ENCODE measurements at regions of chr3 and their contacts with region 1.

Region 1: GRCh38 chr3:120147072-120147871 is 53.0 kb upstream of the GSK3B start:
- DNase-seq: peak; percentile 66 to 90
- H3K4me3 ChIP-seq: peak overlapping the region; percentile 32; the same call in 1 of the 2 replicates
- H3K27ac ChIP-seq: peak overlapping the region; percentile 78
- H3K4me1 ChIP-seq: peaks cover 81% of the 10 kb centered on the region
- H3K27me3 ChIP-seq: no peaks in the 10 kb centered on the region
- CTCF ChIP-seq: peak; percentile 41; the same call in 1 of the 2 replicates

Region 2: DNA sequence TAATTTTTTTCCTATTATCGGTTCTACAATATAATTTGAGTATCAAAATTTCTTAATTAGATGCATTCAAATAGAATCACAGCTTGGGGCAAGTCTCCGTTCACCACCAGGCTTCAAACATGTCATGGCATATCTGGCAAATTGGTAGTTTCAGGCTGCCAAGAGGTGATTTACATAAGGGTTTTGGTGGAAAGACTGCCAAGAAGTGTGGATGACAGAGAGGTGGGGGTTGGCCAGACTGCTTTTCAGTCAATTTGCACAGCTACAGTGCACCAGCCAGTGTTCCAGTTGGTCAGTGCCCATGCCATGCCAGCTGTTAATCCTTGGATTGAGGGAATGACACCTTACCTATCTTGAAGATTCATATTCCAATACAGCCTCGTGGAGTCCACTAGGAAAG is 44.6 kb before region 1 on chr3:
- CTCF ChIA-PET with region 1: interaction called, 11 read pairs
- POLR2A ChIA-PET with region 1: no interaction called
- intact Hi-C with region 1: no loop called
- DNase-seq: no peak
- H3K4me3 ChIP-seq: no peak overlapping the region
- H3K27ac ChIP-seq: no peak overlapping the region
- H3K4me1 ChIP-seq: peaks cover 13% of the 10 kb centered on the region; the same call in 1 of the 2 replicates
- H3K27me3 ChIP-seq: no peaks in the 10 kb centered on the region
- CTCF ChIP-seq: no peak

Region 3: DNA sequence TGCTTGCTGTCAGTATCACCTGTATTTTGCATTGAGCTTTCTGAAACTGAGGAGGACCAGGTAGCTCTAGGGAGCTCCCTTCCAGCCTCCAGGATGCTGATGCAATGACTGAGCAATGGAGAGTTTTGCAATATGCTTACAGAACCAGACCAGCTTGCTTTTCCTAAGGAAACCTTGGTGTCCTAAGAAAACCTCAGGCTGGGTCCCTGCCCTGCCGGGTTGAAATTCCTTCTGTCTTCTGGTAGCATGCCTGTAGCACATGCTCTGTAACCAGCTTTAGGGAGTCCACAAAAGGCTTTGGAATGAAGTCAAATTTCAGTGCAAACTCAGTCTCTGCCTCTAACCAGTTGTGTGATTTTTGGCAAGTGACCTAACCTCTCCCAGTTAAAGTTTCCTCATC is 12.8 kb after region 1 on chr3:
- CTCF ChIA-PET with region 1: no interaction called
- POLR2A ChIA-PET with region 1: interaction called, 5 read pairs
- intact Hi-C with region 1: loop called (anchors 1 kb)
- DNase-seq: peak; percentile 90 to 99
- H3K4me3 ChIP-seq: no peak overlapping the region; the same call in 1 of the 2 replicates
- H3K27ac ChIP-seq: peak overlapping the region; percentile 98
- H3K4me1 ChIP-seq: peaks cover 43% of the 10 kb centered on the region
- H3K27me3 ChIP-seq: no peaks in the 10 kb centered on the region
- CTCF ChIP-seq: no peak

Region 4: GRCh38 chr3:120177151-120177550 is 29.9 kb after region 1 on chr3:
- CTCF ChIA-PET with region 1: interaction called, 3 read pairs
- POLR2A ChIA-PET with region 1: no interaction called
- intact Hi-C with region 1: loop called (anchors 1 kb)
- DNase-seq: peak; percentile 79 to 86
- H3K4me3 ChIP-seq: peak overlapping the region; percentile 32; the same call in 1 of the 2 replicates
- H3K27ac ChIP-seq: peak overlapping the region; percentile 78
- H3K4me1 ChIP-seq: peaks cover 38% of the 10 kb centered on the region
- H3K27me3 ChIP-seq: no peaks in the 10 kb centered on the region
- CTCF ChIP-seq: no peak

Region 5: GRCh38 chr3:120417272-120417911 is 270.1 kb after region 1 on chr3:
- CTCF ChIA-PET with region 1: no interaction called
- POLR2A ChIA-PET with region 1: no interaction called
- intact Hi-C with region 1: no loop called
- DNase-seq: peak; percentile 91 to 92
- H3K4me3 ChIP-seq: peak overlapping the region; percentile 34; the same call in 1 of the 2 replicates
- H3K27ac ChIP-seq: peak overlapping the region; percentile 32; the same call in 1 of the 2 replicates
- H3K4me1 ChIP-seq: peaks cover 11% of the 10 kb centered on the region
- H3K27me3 ChIP-seq: no peaks in the 10 kb centered on the region
- CTCF ChIP-seq: peak; percentile 85

Region 6: DNA sequence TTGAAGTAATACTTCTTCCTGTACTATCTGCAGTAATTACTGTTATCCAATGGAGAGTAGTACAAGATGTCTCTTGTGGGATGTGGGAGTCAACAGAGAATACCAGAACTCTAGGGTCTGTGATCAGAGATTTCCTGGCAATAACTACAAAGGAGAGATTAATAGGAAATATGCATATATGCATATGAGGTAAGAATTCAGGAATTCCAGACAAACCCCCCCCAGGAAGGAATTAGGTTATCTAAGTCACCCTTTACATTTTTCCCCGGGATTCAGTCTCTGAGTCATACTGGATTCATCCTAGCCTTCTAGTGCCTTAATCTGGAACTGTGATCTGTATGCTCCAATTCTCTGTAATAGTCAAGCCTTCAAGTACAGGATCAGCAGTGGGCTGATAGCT is 644.6 kb after region 1 on chr3:
- CTCF ChIA-PET with region 1: no interaction called
- POLR2A ChIA-PET with region 1: no interaction called
- intact Hi-C with region 1: no loop called
- DNase-seq: no peak
- H3K4me3 ChIP-seq: no peak overlapping the region
- H3K27ac ChIP-seq: no peak overlapping the region
- H3K4me1 ChIP-seq: no peaks in the 10 kb centered on the region
- H3K27me3 ChIP-seq: no peaks in the 10 kb centered on the region
- CTCF ChIP-seq: no peak